Esophagus squamous epithelium (tissue), 5 donors: ENCODE measurements at regions of chr9 and their contacts with region 1.

Region 1: GRCh38 chr9:129307227-129307970 is 129.3 kb upstream of the IER5L start:
- DNase-seq: no peak
- H3K4me3 ChIP-seq: no peak overlapping the region
- H3K27ac ChIP-seq: no peak overlapping the region
- H3K4me1 ChIP-seq: no peaks in the 10 kb centered on the region
- H3K27me3 ChIP-seq: no peaks in the 10 kb centered on the region
- CTCF ChIP-seq: no peak
- POLR2A ChIP-seq: no peak

Region 2: GRCh38 chr9:129198319-129199011 is 108.9 kb before region 1 on chr9:
- intact Hi-C with region 1: loop called (anchors 10 kb)
- DNase-seq: no peak
- H3K4me3 ChIP-seq: peak overlapping the region in 3 of 4 donors; percentile 1 to 43 (median 4)
- H3K27ac ChIP-seq: peak overlapping the region; percentile 52 to 88 (median 79)
- H3K4me1 ChIP-seq: peaks cover 9 to 30% (median 19%) of the 10 kb centered on the region in 3 donors
- H3K27me3 ChIP-seq: peaks cover 0 to 16% (median 0%) of the 10 kb centered on the region in 4 donors
- CTCF ChIP-seq: peak in 1 of 6 experiments; percentile 4
- POLR2A ChIP-seq: no peak